ENCODE measurements at regions of chr16 and their contacts with region 1.

Region 1: DNA sequence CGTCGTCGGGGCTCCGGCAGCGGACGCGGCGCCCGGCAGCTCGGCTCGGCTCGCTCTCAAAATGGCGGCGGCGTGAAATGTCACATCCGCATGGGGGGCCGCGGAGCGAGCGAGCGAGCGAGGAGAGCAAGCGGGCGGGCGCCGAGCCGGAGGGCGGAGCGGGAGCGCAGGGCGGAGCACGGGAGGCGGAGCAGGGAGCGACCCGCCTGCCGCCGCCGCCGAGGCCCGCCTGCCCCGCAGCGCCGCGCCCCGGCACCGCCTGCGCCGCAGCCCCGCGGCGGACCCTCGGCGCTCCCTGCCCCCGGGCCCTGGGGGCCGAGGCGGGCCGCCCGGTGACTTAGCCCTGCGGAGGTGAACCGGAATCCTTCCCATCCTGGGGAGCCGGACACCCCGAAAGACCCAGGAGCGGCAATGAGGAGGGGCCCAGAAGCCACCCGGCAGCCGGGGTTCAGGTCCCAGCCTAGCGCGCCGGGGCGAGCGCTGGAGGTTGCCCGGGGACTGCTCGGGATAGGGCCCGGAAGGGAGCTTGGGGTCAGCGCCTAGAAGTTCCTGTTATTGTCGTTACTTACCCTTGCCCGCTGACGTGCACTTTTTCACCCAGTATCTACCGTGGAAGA is at the start of gene USP7:
- DNase-seq: peak; percentile 96
- H3K4me3 ChIP-seq: peak within 1 kb of the TSS; percentile 68 to 91 (median 85)
- H3K27ac ChIP-seq: peak within 1 kb of the TSS; percentile 84 to 88 (median 85)
- H3K4me1 ChIP-seq: peaks cover 39 to 46% (median 43%) of the 10 kb centered on the region in 4 donors
- H3K27me3 ChIP-seq: no peaks in the 10 kb centered on the region
- CTCF ChIP-seq: no peak
- EP300 ChIP-seq: no peak
- POLR2A ChIP-seq: no peak
- total RNA-seq, gene USP7: 67.9 to 84.7 (median 73.3) TPM

Region 2: DNA sequence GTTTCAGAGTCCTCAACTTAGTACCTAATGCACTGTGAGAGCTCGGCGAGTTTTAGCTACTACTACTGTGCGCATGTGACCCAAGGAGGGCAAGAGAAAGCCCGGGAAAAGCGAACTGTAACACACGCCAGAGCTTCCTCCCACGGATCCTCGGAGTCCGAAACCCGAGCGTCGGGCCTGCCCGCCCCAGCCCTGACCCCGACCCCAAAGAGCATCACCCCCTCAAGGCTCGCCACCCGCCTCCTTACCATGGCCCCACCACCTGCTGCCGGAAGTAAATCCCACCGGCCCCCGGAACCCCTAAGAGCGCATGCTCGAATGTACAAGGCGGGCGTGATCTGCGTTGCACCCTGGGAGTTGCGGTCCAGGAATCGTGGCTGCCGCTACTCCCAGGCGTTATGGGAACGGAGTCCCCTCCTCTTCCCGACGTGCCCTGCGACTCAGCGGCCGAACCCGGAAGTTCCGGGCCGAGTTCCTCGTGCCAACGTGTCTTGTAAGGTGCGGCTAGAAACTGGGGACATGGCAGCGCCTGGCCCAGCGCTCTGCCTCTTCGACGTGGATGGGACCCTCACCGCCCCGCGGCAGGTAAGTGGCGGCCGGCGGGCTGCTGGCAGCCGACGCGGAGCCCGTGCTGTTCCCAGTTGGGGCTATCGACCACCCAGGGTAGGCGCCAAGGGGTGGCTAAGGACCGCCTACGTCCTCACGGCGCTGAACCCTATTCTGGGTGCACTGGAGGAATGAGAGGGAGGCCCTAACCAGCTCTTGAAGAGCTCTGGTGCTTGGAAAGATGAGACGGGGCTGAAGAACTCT is 166.4 kb before region 1 on chr16 and contains the starts of genes PMM2 and TMEM186:
- intact Hi-C with region 1: loop called (anchors 10 kb)
- DNase-seq: peak; percentile 97
- H3K4me3 ChIP-seq: peak within 1 kb of the TSS; percentile 72 to 98 (median 96)
- H3K27ac ChIP-seq: peak within 1 kb of the TSS; percentile 79 to 88 (median 82)
- H3K4me1 ChIP-seq: peaks cover 25 to 47% (median 43%) of the 10 kb centered on the region in 4 donors
- H3K27me3 ChIP-seq: no peaks in the 10 kb centered on the region
- CTCF ChIP-seq: peak in 1 of 3 experiments; percentile 24
- EP300 ChIP-seq: no peak
- POLR2A ChIP-seq: no peak
- total RNA-seq, gene PMM2: 19.6 to 34.3 (median 23.5) TPM
- total RNA-seq, gene TMEM186: 7.9 to 12.2 (median 9.6) TPM

Region 3: GRCh38 chr16:8892101-8892575 is 71.8 kb before region 1 on chr16:
- intact Hi-C with region 1: loop called (anchors 5 kb)
- DNase-seq: no peak
- H3K4me3 ChIP-seq: no peak overlapping the region
- H3K27ac ChIP-seq: peak overlapping the region in 1 of 4 donors; percentile 34
- H3K4me1 ChIP-seq: peaks cover 4 to 17% (median 9%) of the 10 kb centered on the region in 4 donors
- H3K27me3 ChIP-seq: no peaks in the 10 kb centered on the region
- CTCF ChIP-seq: no peak
- EP300 ChIP-seq: no peak
- POLR2A ChIP-seq: no peak

Region 4: GRCh38 chr16:8989099-8989878 is 25.4 kb after region 1 on chr16:
- intact Hi-C with region 1: no loop called
- DNase-seq: no peak
- H3K4me3 ChIP-seq: no peak overlapping the region
- H3K27ac ChIP-seq: no peak overlapping the region
- H3K4me1 ChIP-seq: no peaks in the 10 kb centered on the region
- H3K27me3 ChIP-seq: peaks cover 0 to 8% (median 0%) of the 10 kb centered on the region in 4 donors
- CTCF ChIP-seq: no peak
- EP300 ChIP-seq: no peak
- POLR2A ChIP-seq: no peak

Region 5: DNA sequence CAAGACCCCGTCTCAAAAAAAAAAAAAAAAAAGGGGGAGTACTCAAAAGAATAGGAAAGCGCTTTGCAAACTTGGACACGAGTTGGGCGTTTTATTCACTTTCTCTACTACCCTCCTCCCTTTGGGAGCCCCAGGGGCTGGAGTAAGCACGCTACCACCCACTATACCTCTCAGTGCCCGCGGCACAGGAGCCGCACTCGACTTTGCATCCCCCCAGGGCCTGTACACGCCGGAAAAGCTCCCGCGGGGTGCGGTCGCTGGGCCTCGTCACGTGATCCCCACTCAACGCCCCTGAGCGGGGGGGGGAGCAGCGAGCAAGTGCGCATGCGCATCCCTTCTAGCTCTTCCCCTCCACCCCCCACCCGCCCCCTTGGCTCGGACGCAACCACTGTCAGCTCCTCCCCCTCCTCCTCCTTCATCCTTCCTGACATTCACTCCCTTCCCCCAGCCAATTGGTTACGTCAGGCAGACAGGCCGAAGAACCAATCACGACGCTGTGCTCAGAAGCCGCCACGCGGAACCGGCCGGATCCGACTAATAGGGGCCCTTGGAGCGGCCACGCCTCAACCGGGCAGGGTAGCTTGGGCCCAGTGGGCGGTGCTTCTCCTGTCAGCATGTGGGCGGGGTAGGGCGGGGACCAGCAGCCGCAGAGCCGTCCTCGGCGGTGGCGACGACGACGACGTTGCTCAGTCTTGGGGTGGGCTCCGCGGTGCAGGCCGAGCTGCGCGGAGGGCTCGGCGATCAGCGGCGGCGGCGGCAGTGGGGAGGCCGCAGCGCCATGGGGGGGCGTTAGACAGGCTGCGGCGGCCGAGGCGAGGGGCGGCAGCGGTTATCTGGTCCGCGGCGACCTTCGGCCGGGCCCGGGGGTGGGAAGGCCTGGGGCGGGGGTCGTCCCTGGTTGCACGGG is 127.3 kb after region 1 on chr16 and contains the start of gene HAPSTR1:
- intact Hi-C with region 1: loop called (anchors 5 kb)
- DNase-seq: peak; percentile 100
- H3K4me3 ChIP-seq: peak within 1 kb of the TSS; percentile 75 to 100 (median 97)
- H3K27ac ChIP-seq: peak within 1 kb of the TSS; percentile 95 to 100 (median 98)
- H3K4me1 ChIP-seq: peaks cover 41 to 47% (median 45%) of the 10 kb centered on the region in 4 donors
- H3K27me3 ChIP-seq: no peaks in the 10 kb centered on the region
- CTCF ChIP-seq: no peak
- EP300 ChIP-seq: no peak
- POLR2A ChIP-seq: peak; percentile 99
- total RNA-seq, gene HAPSTR1: 51.7 to 65.2 (median 57.1) TPM

Region 6: DNA sequence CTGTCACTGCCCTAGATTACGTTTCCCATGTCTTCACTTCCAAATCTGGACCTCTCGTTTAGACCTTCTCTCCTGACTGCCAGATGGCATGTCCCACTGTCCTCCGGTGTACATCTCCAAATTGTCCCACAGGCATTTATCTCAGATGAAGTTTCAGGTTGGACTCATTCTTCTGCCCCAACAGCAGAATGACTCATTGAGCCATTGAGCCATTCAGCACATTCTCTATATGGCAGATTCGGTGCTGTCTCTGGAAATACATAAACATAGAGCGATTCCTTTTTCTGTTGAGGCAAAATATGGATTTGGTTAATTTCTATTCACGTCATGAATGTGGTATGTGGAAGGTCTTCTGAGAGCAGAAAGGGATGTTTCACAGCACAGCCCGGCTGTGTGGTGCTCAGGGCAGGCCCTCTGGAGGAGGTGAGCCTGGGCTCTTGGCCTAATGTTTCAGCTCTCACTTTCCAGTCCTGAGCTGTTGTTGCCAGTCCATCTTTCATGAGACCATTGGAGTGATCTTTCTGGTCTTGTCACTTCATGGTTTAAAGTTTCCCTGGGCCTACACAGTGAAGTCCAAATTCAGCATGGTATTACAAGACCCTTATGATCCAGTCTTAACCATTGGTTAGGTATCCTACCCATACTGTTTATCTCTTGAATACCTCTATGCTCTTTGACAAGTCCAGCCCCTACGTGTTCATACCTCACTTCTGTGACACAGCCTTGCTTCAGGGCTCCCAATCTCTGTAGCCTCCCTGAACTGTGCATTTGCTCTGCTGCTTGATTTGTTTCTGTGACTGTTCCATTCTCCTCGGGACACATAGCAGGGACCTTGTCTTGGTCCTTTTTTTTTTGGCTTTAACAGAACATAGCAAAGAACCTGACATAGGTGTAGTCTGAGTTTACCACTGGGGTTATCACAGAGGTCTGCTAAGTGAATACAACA is 143.4 kb after region 1 on chr16:
- intact Hi-C with region 1: loop called (anchors 5 kb)
- DNase-seq: no peak
- H3K4me3 ChIP-seq: no peak overlapping the region
- H3K27ac ChIP-seq: no peak overlapping the region
- H3K4me1 ChIP-seq: peaks cover 97 to 100% (median 100%) of the 10 kb centered on the region in 4 donors
- H3K27me3 ChIP-seq: no peaks in the 10 kb centered on the region
- CTCF ChIP-seq: no peak
- EP300 ChIP-seq: no peak
- POLR2A ChIP-seq: no peak

Measured in esophagus muscularis mucosa (tissue), 4 donors.